Psoas muscle (tissue), 8 donors: ENCODE measurements at regions of chr6 and their contacts with region 1.

Region 1: DNA sequence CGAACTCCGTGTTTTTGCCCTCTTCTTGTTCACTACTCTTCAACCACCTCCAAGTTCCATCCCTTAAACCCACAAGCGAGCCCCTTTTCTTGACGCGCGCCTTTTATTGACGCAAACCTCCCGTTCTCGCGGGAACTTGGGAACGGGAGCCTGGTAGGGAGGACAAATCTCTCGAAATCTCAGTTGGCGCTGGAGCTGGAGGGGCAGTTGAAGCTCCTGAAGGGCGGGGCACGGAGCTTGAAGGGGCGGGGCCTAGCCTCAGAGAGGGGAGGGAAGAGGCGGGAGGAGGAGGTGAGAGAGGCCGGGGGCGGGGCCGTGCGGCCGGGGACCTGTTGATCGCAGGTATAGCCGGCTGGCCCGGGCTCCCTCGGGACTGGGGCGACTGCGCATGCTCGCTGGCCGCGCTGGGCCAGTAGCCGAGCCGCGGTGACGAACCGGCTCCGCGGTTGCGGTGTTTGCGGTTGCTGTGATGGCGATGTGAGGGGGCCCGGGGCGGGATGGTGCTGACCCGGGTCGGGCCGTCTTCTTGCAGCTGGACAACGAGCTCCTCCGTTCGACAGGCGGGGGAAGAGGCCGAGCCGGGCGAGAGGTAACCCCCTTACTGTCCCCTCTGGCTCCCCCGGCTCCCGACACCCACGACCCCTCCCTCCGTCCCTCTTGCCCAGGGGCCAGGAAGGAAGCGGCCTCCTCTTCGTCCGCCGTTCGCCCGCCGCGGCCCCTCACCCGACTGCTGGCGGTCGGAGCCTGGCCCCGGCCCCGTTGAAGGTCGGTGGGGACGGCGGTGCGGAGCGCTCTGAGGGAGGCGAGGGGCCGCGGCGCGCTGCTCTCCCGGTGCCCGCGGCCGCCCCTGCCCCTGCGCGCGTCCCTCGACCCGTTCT is at the start of gene FAM135A:
- DNase-seq: peak; percentile 95 to 97
- ATAC-seq: peak; percentile 98 to 99 (median 99)
- H3K4me3 ChIP-seq: peak within 1 kb of the TSS; percentile 94
- H3K27ac ChIP-seq: peak within 1 kb of the TSS; percentile 72
- H3K4me1 ChIP-seq: no peaks in the 10 kb centered on the region
- H3K27me3 ChIP-seq: no peaks in the 10 kb centered on the region
- CTCF ChIP-seq: no peak
- total RNA-seq, gene FAM135A: 4.3 to 9.1 (median 6.8) TPM

Region 2: DNA sequence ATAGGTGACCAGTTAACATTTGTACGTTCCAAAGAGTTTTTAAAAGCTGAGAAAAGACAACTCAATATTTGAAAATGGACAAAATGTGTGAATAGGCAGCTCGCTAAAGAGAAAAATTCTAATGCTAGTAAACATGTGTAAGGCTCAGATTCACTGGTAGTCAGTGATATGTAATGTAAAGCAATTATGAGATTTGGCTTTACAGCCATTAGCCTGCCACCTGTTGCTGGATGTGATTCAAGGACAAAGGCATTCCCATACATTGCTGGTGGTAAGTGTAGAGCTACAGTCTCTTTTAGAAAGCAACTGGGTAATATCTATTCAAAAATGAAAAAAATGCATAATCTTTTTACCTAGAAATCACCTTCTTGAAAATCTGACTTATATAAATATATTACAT is 432.7 kb before region 1 on chr6:
- intact Hi-C with region 1: loop called in 1 of 2 experiments (anchors 5 kb)
- DNase-seq: no peak
- ATAC-seq: no peak
- H3K4me3 ChIP-seq: no peak overlapping the region
- H3K27ac ChIP-seq: no peak overlapping the region
- H3K4me1 ChIP-seq: no peaks in the 10 kb centered on the region
- H3K27me3 ChIP-seq: no peaks in the 10 kb centered on the region
- CTCF ChIP-seq: no peak

Region 3: GRCh38 chr6:70474751-70475150 is 61.4 kb after region 1 on chr6:
- intact Hi-C with region 1: no loop called
- DNase-seq: no peak
- ATAC-seq: no peak
- H3K4me3 ChIP-seq: no peak overlapping the region
- H3K27ac ChIP-seq: no peak overlapping the region
- H3K4me1 ChIP-seq: no peaks in the 10 kb centered on the region
- H3K27me3 ChIP-seq: no peaks in the 10 kb centered on the region
- CTCF ChIP-seq: no peak

Region 4: GRCh38 chr6:70667711-70668498 is 254.6 kb after region 1 on chr6 and contains the start of gene SMAP1:
- intact Hi-C with region 1: loop called in 1 of 2 experiments (anchors 5 kb)
- DNase-seq: peak; percentile 97 to 98
- ATAC-seq: peak; percentile 90 to 95 (median 92)
- H3K4me3 ChIP-seq: peak within 1 kb of the TSS; percentile 89
- H3K27ac ChIP-seq: peak within 1 kb of the TSS; percentile 95
- H3K4me1 ChIP-seq: peaks cover 56% of the 10 kb centered on the region
- H3K27me3 ChIP-seq: no peaks in the 10 kb centered on the region
- CTCF ChIP-seq: no peak
- total RNA-seq, gene SMAP1: 24.0 to 40.2 (median 29.8) TPM

Region 5: GRCh38 chr6:70686548-70687133 is 273.3 kb after region 1 on chr6:
- intact Hi-C with region 1: loop called in 1 of 2 experiments (anchors 5 kb)
- DNase-seq: no peak
- ATAC-seq: peak in 3 of 4 donors; percentile 53 to 62 (median 57)
- H3K4me3 ChIP-seq: no peak overlapping the region
- H3K27ac ChIP-seq: no peak overlapping the region
- H3K4me1 ChIP-seq: peaks cover 35% of the 10 kb centered on the region
- H3K27me3 ChIP-seq: no peaks in the 10 kb centered on the region
- CTCF ChIP-seq: peak; percentile 80